ENCODE measurements at regions of chr19 and their contacts with region 1.

Region 1: GRCh38 chr19:19361075-19361594 is 40.5 kb downstream of the MAU2 start:
- DNase-seq: peak; percentile 62
- H3K4me3 Mint-ChIP-seq: no peak overlapping the region
- H3K27ac Mint-ChIP-seq: peak overlapping the region; percentile 28
- H3K4me1 Mint-ChIP-seq: peaks cover 16% of the 10 kb centered on the region
- H3K27me3 Mint-ChIP-seq: no peaks in the 10 kb centered on the region

Region 2: DNA sequence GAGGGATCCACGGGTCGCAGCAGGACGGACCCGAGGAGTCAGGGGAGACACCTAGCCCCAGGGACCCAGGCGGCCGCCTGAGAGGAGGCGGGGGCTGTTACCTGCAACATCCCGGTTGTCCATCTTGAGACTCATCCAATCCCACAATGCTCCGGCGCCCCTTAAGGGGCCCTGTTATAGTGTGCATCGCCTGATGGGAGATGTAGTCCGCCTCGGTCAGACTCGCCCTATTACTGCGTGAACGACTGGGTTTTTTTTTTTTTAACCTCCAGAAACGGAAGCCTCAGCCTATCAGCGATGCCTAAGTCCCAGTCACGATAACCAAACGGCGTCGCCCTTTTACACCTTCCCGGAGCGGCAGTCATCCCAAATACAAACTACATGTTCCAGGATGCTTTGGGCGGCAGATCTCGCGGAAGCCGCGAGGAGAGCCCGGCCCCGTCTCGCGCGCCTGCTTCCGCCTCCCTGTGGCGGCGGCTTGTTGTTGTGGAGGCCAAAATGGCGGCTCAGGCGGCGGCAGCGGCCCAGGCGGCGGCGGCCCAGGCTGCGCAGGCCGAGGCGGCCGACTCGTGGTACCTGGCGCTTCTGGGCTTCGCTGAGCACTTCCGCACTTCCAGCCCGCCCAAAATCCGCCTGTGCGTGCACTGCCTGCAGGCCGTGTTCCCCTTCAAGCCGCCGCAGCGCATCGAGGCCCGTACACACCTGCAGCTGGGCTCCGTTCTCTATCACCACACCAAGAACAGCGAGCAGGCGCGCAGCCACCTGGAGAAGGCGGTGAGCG is 40.6 kb before region 1 on chr19 and contains the starts of genes MAU2 and SUGP1:
- intact Hi-C with region 1: loop called (anchors 2 kb)
- DNase-seq: peak; percentile 91
- H3K4me3 Mint-ChIP-seq: peak within 1 kb of the TSS; percentile 95
- H3K27ac Mint-ChIP-seq: peak within 1 kb of the TSS; percentile 100
- H3K4me1 Mint-ChIP-seq: peaks cover 29% of the 10 kb centered on the region
- H3K27me3 Mint-ChIP-seq: no peaks in the 10 kb centered on the region
- total RNA-seq, gene MAU2: 55.3 and 60.3 TPM in 2 replicates
- total RNA-seq, gene SUGP1: 67.6 and 73.4 TPM in 2 replicates

Measured in activated T-helper 2 cell treated with anti-CD3 and anti-CD28 coated beads, Interferon-gamma antibody, Interleukin-2, Interleukin-4, amounts not matched to agents 10 μg/mL and 5 μg/mL and 100 μg/mL, durations not matched to agents 14 hours and 24 hours and 36 hours (primary cell).